ENCODE measurements at regions of chrX and their contacts with region 1.

Region 1: DNA sequence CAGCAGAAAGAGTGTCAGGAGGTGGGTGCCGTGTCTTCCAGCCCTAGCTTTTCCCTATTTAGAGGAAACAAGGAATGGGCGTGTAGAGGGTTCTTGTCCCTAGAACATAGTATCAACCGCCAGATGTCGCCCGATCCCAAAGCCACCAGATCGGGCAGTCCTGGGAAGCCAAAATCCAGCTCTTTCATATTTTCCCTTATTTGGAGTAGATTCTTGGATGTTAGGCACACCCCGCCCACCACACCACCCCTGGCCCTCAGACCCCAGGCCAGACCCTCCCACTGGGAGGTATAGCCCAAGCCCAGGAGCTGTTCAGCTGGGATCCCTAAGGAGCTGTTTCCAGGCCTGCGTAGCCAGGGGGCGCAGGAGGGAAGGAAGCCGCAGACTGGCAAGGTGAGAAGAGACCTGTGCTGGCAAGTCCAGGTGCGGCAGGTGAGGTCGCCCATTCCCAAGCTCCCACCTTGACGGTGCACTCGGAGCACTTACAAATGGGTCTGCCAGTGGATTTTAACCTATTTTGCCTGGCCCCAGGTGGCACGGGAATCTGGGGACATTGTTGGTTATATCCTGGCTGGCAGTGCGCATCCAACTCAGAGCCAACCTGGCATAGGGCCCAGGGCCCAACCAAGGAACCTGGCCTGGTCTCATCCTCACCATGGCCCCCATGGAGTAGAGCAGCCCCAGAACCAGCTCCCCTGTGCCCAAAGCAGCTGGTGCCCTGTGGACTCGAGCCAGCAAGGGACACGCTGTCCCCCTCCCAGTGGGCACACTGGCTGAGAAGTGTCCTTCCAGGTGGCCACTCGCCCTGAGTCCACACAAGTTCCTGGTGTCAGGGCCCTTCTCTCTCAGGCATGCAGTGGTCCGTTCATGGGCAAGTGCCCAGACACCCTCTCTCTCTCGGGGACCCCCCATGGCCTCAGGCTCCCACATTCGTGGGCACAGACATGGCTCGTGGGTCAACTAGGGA is 811 bp downstream of the FLNA start:
- DNase-seq: no peak
- H3K4me3 ChIP-seq: no peak overlapping the region
- H3K27ac ChIP-seq: no peak overlapping the region
- H3K4me1 ChIP-seq: peaks cover 43% of the 10 kb centered on the region
- CTCF ChIP-seq: 0 out of 2 replicates have a peak, but pooled peaks have one; percentile 5

Region 2: DNA sequence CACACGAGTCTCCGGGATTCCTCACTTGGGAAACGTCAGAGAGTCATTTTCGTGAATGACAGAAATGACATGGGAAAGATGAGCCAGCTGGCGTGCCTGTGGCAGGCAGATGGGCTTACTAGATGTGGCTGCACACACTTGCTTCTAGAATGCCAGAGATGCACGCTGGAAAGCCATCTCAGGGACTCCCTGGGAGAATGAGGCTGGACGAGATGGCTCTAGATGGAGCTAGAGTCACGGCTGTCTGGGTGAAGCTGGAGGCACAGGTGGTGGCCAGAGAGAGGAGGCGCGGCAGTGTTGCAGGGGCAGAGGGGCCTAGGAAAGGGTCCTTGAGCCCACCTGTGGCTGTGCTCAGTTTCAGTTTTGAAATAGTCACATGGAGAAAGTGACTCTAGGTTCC is 52.0 kb before region 1 on chrX:
- CTCF ChIA-PET with region 1: no interaction called
- POLR2A ChIA-PET with region 1: no interaction called
- intact Hi-C with region 1: loop called (anchors 2 kb)
- DNase-seq: peak; percentile 57
- H3K4me3 ChIP-seq: peak overlapping the region; percentile 51
- H3K27ac ChIP-seq: peak overlapping the region; percentile 37
- H3K4me1 ChIP-seq: peaks cover 47% of the 10 kb centered on the region
- CTCF ChIP-seq: peak; percentile 59

Region 3: GRCh38 chrX:154384284-154384892 is 10.8 kb after region 1 on chrX:
- CTCF ChIA-PET with region 1: no interaction called
- POLR2A ChIA-PET with region 1: no interaction called
- intact Hi-C with region 1: no loop called
- DNase-seq: no peak
- H3K4me3 ChIP-seq: no peak overlapping the region
- H3K27ac ChIP-seq: no peak overlapping the region
- H3K4me1 ChIP-seq: peaks cover 11% of the 10 kb centered on the region
- CTCF ChIP-seq: peak; percentile 33; the same call in 1 of the 2 replicates

Region 4: GRCh38 chrX:155001873-155002272 is 628.2 kb after region 1 on chrX:
- CTCF ChIA-PET with region 1: no interaction called
- POLR2A ChIA-PET with region 1: no interaction called
- intact Hi-C with region 1: no loop called
- DNase-seq: no peak
- H3K4me3 ChIP-seq: no peak overlapping the region
- H3K27ac ChIP-seq: no peak overlapping the region
- H3K4me1 ChIP-seq: no peaks in the 10 kb centered on the region
- CTCF ChIP-seq: no peak

Measured in OCI-LY7 (cell line).